Mammary epithelial cell (primary cell): ENCODE measurements at regions of chr12 and their contacts with region 1.

Region 1: GRCh38 chr12:54958048-54958658 is 26.4 kb downstream of the TESPA1 start:
- DNase-seq: peak; percentile 50
- H3K4me3 ChIP-seq: no peak overlapping the region
- H3K27ac ChIP-seq: no peak overlapping the region
- H3K4me1 ChIP-seq: no peaks in the 10 kb centered on the region
- H3K27me3 ChIP-seq: no peaks in the 10 kb centered on the region
- CTCF ChIP-seq: peak; percentile 50 to 70

Region 2: DNA sequence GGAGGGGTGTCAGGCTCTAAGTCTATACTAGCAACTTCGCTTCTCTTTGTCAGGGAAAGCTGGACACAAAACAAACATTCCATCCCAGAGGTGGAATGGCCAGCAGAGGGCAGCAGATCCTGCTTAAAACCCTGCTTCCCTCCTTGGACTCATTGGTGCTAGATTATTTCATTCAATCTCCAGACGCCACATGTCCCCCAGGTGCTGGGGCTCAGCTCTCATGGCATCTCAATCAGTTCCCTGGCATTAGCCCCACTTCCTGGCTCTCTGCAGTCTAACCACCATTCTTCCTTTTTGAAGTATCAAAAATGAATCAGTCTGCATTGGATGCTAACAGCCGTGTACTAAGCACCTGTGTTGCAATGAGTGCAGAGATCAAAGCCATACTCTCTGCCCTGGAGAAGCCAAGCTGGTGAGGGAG is 361.6 kb before region 1 on chr12:
- CTCF ChIA-PET with region 1: no interaction called
- dilution Hi-C with region 1: no loop called
- in situ Hi-C with region 1: no loop called
- intact Hi-C with region 1: loop called (anchors 2 kb)
- DNase-seq: peak; percentile 43
- H3K4me3 ChIP-seq: no peak overlapping the region
- H3K27ac ChIP-seq: no peak overlapping the region
- H3K4me1 ChIP-seq: no peaks in the 10 kb centered on the region
- H3K27me3 ChIP-seq: peaks cover 5% of the 10 kb centered on the region
- CTCF ChIP-seq: peak; percentile 87 to 95

Region 3: GRCh38 chr12:54723379-54724256 is 234.5 kb before region 1 on chr12:
- CTCF ChIA-PET with region 1: interaction called, 3 read pairs
- dilution Hi-C with region 1: no loop called
- in situ Hi-C with region 1: no loop called
- intact Hi-C with region 1: loop called (anchors 1 kb)
- DNase-seq: no peak
- H3K4me3 ChIP-seq: no peak overlapping the region
- H3K27ac ChIP-seq: no peak overlapping the region
- H3K4me1 ChIP-seq: no peaks in the 10 kb centered on the region
- H3K27me3 ChIP-seq: peaks cover 2% of the 10 kb centered on the region
- CTCF ChIP-seq: peak; percentile 47 to 65

Region 4: GRCh38 chr12:54759751-54760150 is 198.4 kb before region 1 on chr12:
- CTCF ChIA-PET with region 1: no interaction called
- dilution Hi-C with region 1: no loop called
- in situ Hi-C with region 1: loop called (anchors 10 kb)
- intact Hi-C with region 1: loop called (anchors 1 kb)
- DNase-seq: peak; percentile 52
- H3K4me3 ChIP-seq: no peak overlapping the region
- H3K27ac ChIP-seq: no peak overlapping the region
- H3K4me1 ChIP-seq: no peaks in the 10 kb centered on the region
- H3K27me3 ChIP-seq: no peaks in the 10 kb centered on the region
- CTCF ChIP-seq: peak; percentile 43 to 70

Region 5: GRCh38 chr12:54935235-54935951 is 22.8 kb before region 1 on chr12:
- CTCF ChIA-PET with region 1: no interaction called
- dilution Hi-C with region 1: no loop called
- in situ Hi-C with region 1: no loop called
- intact Hi-C with region 1: loop called (anchors 1 kb)
- DNase-seq: peak; percentile 96
- H3K4me3 ChIP-seq: no peak overlapping the region
- H3K27ac ChIP-seq: peak overlapping the region; percentile 95
- H3K4me1 ChIP-seq: peaks cover 55% of the 10 kb centered on the region
- H3K27me3 ChIP-seq: no peaks in the 10 kb centered on the region
- CTCF ChIP-seq: peak in 1 of 2 donors; percentile 19